ENCODE measurements at regions of chr5 and their contacts with region 1.

Region 1: DNA sequence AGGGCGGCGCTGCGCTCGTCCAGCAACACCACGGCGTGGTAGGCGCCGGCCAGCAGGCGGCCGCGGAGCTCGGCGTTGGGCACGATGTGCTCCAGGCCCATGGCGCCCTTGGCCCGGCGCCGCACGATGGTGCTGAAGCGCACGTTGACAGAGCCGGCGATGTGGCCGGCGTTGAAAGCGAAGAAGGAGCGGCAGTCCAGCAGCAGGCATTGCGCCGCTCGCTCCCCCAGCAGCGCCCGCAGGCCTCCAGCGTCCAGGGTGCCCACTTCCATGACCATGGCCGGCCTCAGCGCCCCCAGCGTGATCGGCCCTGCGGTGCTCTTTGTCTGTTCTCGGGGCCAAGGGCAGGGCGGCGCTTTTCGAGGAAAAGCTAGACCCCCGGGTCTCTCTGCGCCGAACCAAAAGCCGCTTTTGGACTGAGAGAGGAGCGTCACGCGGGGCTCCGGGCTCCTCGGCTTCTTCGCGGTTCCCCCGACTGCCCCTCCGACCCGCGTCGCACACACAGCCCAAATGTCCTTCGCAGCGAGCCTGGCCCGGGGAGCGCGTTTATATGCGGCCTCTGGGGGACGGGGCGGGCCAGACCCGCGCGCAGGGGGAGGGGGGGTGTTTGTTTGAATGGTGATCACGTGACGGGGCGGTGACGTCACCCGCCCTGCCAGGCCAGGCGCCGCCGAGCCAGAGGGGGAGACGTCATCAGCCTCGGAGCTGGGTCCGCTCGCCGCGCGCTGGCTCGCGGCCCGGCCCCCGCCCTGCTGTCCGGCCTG is at the start of gene DUSP1:
- DNase-seq: peak; percentile 100
- H3K4me3 ChIP-seq: peak within 1 kb of the TSS; percentile 82
- H3K27ac ChIP-seq: peak within 1 kb of the TSS; percentile 98 to 99
- H3K4me1 ChIP-seq: peaks cover 8% of the 10 kb centered on the region
- H3K27me3 ChIP-seq: no peaks in the 10 kb centered on the region
- CTCF ChIP-seq: peak in 2 of 3 donors; percentile 49 to 63
- EP300 ChIP-seq: peak; percentile 49
- POLR2A ChIP-seq: no peak
- total RNA-seq, gene DUSP1: 112 to 2,672 (median 185) TPM

Region 2: DNA sequence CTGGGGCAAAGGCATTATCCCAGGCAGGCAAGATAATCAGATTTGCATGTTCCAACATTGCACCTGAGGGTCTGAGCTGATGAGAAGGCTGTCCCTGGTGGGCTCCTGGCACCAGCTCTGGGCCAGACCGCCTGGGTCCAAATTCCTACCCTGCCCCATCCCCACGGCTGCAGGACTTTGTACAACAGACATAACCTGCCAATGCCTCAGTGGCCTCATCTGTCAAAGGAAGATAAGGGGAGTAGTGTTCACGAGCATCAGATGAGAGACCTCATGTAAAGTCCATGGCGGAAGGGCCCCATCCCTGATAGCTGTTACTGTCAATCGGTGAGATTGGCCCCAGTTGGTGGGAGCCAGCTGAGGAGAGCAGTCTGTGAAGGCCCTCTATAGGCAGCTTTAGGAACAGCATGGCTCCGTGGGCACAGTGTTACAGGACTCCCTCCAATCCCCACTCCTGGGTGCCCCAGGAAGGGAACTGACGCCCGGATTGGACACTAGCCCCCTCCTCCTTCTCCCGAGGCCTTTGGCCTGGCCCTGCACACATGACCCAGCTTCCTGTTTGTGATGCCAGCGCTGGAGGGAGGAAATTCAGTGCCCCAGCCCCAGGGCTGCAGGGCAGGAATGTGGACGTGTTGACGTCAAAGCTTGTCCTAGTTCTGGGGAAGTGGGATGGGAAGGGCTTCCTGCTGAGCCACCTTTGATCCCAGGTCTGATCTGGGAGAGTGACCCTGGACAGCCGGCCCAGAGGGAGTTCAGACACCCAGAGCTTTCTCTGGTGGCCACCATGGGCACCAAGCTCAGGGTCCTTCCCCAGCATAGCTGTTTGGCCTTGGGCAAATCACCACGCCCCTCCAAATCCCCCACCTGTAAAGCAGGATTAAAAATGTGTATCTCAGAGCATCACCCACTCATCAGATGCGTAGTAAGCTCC is 56.1 kb before region 1 on chr5:
- intact Hi-C with region 1: loop called in 3 of 4 experiments (anchors 5 kb)
- DNase-seq: peak; percentile 49 to 78 (median 72)
- H3K4me3 ChIP-seq: no peak overlapping the region
- H3K27ac ChIP-seq: no peak overlapping the region
- H3K4me1 ChIP-seq: no peaks in the 10 kb centered on the region
- H3K27me3 ChIP-seq: peaks cover 2% of the 10 kb centered on the region
- CTCF ChIP-seq: peak; percentile 36 to 73 (median 67)
- EP300 ChIP-seq: peak; percentile 60
- POLR2A ChIP-seq: no peak

Region 3: DNA sequence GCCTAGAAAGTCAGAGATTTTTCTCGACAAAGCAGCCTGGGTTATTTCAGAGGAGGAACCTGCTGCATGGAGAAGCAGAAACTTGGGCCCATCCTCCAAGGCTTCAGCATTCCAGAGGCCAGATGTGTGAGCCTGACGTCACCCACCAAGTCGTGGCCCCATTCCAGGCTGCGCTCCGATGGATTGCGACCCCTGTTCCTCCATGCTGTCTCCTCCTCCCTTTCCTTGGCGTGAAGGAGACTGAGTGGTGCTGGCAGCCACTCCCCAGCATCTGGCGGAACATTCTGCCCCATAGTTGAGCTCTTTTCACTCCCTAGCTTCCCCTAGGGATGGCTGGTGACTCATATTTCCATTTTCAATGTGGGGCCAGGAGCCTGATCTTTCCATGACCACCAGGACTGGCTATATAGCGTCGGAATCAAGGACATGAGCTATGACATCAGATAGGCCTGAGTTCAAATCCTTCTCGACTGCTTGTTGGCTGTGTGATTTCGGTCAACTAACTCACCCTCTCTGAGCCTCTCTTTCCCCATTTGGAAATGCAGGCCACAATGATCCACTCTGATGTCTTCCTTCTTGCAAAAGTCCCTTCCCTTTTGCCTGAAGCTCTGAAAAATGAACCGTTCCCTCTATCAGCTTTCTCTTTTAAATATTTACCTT is 24.6 kb after region 1 on chr5:
- intact Hi-C with region 1: loop called in 2 of 4 experiments (anchors 2 kb)
- DNase-seq: peak; percentile 98 to 99 (median 99)
- H3K4me3 ChIP-seq: no peak overlapping the region
- H3K27ac ChIP-seq: peak overlapping the region; percentile 4 to 77
- H3K4me1 ChIP-seq: peaks cover 13% of the 10 kb centered on the region
- H3K27me3 ChIP-seq: no peaks in the 10 kb centered on the region
- CTCF ChIP-seq: peak in 2 of 3 donors; percentile 21 to 47
- EP300 ChIP-seq: peak; percentile 99
- POLR2A ChIP-seq: peak; percentile 34

Region 4: GRCh38 chr5:172833686-172834414 is 63.0 kb after region 1 on chr5 and contains the start of gene ERGIC1:
- intact Hi-C with region 1: loop called in 1 of 4 experiments (anchors 10 kb)
- DNase-seq: peak; percentile 73 to 86 (median 80)
- H3K4me3 ChIP-seq: peak within 1 kb of the TSS; percentile 71
- H3K27ac ChIP-seq: peak within 1 kb of the TSS; percentile 57 to 58
- H3K4me1 ChIP-seq: peaks cover 13% of the 10 kb centered on the region
- H3K27me3 ChIP-seq: no peaks in the 10 kb centered on the region
- CTCF ChIP-seq: no peak
- EP300 ChIP-seq: no peak
- POLR2A ChIP-seq: peak; percentile 57
- total RNA-seq, gene ERGIC1: 41.7 to 132 (median 92.3) TPM

Region 5: DNA sequence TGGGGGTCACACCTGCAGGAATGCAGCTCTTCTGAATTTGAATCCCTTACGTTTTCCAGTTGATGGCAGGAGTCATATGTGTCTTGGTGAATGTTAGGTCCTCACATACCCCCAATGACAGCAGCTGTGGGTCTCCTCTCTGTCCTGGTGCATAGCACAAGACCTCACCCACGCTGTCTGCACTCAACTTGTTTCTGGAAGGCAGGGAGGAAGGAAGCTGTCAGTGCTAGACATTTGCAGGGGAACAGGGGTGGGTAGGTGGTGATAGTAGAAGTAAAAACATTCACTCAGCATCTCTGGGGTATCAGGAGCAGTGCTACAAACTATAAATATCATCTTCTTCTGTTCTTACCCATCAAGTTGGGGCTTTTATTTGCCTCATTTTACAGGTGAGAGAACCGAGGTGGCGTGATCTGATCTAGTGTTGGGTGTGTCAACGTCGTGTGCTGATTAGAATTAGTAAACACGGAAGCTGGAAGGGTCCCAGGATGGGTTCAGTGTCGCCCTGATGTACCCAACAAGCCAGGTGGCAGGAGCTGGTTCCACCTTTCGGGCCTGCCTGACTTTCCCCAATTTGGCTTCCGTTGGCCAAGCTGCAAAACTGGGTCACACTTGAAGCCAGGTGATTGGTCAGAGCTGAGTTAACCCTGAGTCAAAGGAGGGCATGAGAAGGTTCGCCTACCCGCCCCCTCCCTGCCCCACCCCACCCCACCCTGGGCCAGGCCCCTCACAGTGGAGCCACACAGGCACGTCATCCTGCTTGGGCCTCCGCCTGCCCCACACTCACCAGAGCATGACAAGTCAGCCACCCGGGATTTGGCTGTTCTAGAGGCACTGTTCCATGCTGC is 79.0 kb after region 1 on chr5:
- intact Hi-C with region 1: no loop called
- DNase-seq: no peak
- H3K4me3 ChIP-seq: no peak overlapping the region
- H3K27ac ChIP-seq: no peak overlapping the region
- H3K4me1 ChIP-seq: peaks cover 6% of the 10 kb centered on the region
- H3K27me3 ChIP-seq: no peaks in the 10 kb centered on the region
- CTCF ChIP-seq: no peak
- EP300 ChIP-seq: no peak
- POLR2A ChIP-seq: no peak

Region 6: DNA sequence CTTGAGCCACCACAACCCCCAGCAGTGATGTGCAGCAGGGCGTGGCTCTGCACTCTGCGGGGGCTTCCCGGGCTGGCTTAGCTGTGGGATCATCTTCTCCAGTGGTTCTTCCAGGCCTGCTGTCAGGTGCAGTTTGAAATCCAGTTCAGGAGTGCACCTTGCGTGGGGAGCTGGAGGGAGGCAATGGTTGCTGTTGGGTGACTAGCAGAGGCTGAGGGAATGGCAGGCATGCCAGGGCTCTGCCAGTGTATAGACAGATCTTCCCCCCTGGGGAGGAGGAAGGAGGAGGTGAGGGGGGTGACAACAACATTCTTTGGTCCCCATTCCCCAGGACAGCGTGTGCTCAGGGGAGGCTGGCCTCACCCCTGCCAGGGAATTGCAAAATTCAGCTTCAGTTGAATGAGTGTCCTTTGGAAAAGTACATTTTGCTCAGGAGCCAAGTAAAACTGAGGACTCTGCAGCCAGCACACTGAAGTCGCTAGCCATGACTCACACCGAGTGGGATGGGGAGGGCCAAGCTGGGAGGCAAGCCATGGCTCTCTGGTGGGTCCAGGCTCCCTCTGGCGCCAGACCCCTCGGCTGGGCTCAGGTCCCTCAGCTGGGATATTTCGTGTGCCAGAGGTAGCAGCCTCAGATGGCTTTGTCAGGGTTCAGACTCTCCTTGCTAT is 98.2 kb after region 1 on chr5:
- intact Hi-C with region 1: loop called in 2 of 4 experiments (anchors 2 to 5 kb)
- DNase-seq: peak; percentile 84 to 92 (median 87)
- H3K4me3 ChIP-seq: no peak overlapping the region
- H3K27ac ChIP-seq: peak overlapping the region; percentile 63 to 76
- H3K4me1 ChIP-seq: peaks cover 56% of the 10 kb centered on the region
- H3K27me3 ChIP-seq: no peaks in the 10 kb centered on the region
- CTCF ChIP-seq: peak in 2 of 3 donors; percentile 59 to 64
- EP300 ChIP-seq: peak; percentile 95
- POLR2A ChIP-seq: no peak

Region 7: DNA sequence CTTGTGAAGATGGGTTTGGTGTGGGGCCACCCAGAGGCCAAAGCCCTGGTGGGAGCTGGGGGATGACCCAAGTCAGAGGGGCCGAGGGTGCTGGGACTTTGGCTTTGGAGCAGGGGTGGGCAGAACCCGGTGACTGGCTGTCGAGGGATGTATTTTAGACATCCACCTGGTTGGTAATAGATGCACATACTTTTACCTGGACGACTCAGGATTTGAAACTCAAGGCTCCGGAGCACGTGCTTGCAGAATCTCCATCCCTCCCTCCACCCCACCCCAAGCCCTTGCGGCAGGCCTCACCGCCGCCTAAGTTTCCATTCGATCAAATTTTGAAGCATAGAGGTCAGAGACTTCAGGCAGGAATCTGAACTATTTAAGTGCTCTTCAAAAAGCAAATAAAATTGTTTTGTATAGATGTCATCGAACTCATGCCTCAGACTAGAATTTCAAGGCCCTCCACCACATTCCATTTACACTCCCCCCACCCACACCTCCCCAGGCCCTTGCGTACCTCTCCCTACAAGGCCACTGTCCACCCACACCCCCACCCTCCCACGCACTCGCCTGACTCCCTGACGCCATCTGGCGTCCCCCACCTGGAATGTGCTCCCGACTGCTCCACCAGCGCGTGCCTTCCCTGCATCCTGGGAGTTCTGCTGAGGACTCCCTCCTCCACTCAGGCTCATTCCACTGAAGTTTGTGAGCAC is 131.8 kb after region 1 on chr5:
- intact Hi-C with region 1: loop called in 3 of 4 experiments (anchors 2 to 5 kb)
- DNase-seq: peak; percentile 91 to 94 (median 93)
- H3K4me3 ChIP-seq: no peak overlapping the region
- H3K27ac ChIP-seq: peak overlapping the region; percentile 75 to 79
- H3K4me1 ChIP-seq: peaks cover 35% of the 10 kb centered on the region
- H3K27me3 ChIP-seq: no peaks in the 10 kb centered on the region
- CTCF ChIP-seq: peak; percentile 23 to 75 (median 44)
- EP300 ChIP-seq: peak; percentile 5
- POLR2A ChIP-seq: no peak

Measured in ovary (tissue), 10 donors.